Mammary epithelial cell (primary cell): ENCODE measurements at regions of chr16 and their contacts with region 1.

Region 1: DNA sequence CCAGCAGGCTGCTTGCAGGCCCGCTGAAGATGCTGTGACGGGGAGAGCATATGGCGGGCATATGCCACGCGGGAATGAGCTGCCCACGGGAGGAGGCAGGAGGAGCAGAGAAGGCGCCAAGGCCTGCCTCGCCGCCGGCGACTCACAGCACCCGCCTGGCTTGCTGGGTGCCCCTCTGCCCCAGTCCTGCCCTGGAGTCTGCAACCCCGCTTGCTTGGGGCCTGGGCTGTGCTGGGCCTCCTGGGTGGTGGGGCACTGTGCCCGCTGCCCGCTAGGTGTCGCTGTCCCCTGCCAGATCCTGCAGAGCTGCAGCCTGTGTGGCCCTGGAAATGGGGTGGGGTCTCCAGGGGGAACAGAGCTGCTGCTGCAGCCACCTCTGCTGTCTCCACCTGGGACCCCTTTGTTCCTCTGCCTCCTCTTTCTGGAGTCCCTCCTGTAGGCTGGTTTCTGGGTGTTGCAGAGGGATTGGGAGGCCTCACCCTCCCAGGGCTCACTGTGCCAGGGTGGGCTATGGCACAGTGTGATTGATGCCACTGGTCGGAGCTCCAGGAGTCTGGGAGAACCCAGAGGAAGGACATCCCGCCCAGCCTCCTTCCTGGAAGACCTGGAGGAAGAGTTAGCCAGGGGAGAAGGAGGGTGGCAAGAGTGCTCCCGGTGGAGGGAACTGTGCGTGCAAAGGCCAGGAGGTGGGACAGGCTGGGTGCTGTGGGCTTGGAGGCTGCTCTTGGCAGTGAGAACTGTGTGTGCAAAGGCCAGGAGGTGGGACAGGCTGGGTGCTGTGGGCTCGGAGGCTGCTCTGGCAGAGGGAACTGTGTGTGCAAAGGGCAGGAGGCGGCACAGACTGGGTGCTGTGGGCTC is 141.0 kb upstream of the CIBAR2 start:
- DNase-seq: no peak
- H3K4me3 ChIP-seq: no peak overlapping the region
- H3K27ac ChIP-seq: no peak overlapping the region
- H3K4me1 ChIP-seq: no peaks in the 10 kb centered on the region
- H3K27me3 ChIP-seq: no peaks in the 10 kb centered on the region
- CTCF ChIP-seq: peak; percentile 94 to 96

Region 2: GRCh38 chr16:84663433-84664101 is 589.7 kb before region 1 on chr16:
- CTCF ChIA-PET with region 1: no interaction called
- dilution Hi-C with region 1: no loop called
- in situ Hi-C with region 1: no loop called
- intact Hi-C with region 1: no loop called
- DNase-seq: no peak
- H3K4me3 ChIP-seq: no peak overlapping the region
- H3K27ac ChIP-seq: no peak overlapping the region
- H3K4me1 ChIP-seq: no peaks in the 10 kb centered on the region
- H3K27me3 ChIP-seq: no peaks in the 10 kb centered on the region
- CTCF ChIP-seq: no peak

Region 3: GRCh38 chr16:85187002-85187401 is 66.3 kb before region 1 on chr16:
- CTCF ChIA-PET with region 1: no interaction called
- dilution Hi-C with region 1: loop called (anchors 5 kb)
- in situ Hi-C with region 1: no loop called
- intact Hi-C with region 1: no loop called
- DNase-seq: no peak
- H3K4me3 ChIP-seq: no peak overlapping the region
- H3K27ac ChIP-seq: no peak overlapping the region
- H3K4me1 ChIP-seq: peaks cover 10% of the 10 kb centered on the region
- H3K27me3 ChIP-seq: no peaks in the 10 kb centered on the region
- CTCF ChIP-seq: no peak